Activated CD4-positive, alpha-beta T cell treated with anti-CD3 and anti-CD28 coated beads, Interleukin-2, amount 10 ng/mL, durations not matched to agents 7 days and 5 days (primary cell): ENCODE measurements at regions of chr2 and their contacts with region 1.

Region 1: DNA sequence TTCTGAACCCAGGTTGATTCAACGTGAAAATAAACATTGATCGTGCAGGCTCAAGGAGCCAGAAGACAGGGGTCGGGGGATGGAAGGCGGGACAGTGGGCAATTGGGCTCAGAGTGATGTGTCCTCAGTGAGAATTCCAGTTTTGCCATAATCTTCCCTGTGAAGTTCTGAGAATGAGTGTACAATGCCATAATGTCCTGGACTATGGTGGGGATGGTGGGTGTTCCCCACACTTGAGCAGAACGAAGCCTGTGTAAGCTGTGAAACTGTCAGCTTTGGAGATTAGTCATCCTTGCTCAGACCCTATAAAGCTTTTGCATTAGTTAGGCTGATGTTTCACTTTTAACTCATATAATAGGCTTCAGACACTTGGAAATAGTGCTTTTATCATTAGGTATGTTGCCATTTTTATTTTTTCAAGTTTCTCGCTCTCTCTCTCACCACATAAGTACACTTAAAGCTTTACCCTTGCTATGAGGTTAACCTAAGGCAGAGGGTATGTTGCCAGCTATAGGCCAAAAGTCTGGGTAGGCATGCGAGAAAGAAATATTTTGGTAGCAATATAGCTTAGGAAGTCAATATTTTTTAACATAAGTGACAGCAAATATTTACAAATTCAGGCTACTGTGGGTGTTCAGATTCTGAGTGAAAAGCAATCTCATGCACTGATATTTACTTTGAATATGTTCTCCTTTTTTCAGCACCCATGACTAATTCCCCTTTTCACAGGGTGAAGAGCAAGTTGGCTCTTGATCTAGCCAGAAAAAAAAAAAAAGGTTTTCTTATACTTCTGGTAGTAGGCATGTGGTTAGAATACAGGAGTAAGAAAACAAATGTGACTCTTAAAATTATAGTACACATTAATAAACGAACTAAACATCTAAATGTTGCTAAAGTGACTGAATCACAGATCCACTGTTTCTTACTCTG is 47.2 kb downstream of the CDC42EP3 start:
- DNase-seq: no peak
- H3K4me3 Mint-ChIP-seq: peak overlapping the region; percentile 5
- H3K27ac Mint-ChIP-seq: peak overlapping the region; percentile 89
- H3K4me1 Mint-ChIP-seq: peaks cover 45% of the 10 kb centered on the region
- H3K27me3 Mint-ChIP-seq: no peaks in the 10 kb centered on the region

Region 2: GRCh38 chr2:37337642-37338310 is 286.5 kb before region 1 on chr2:
- CTCF ChIA-PET with region 1: no interaction called
- POLR2A ChIA-PET with region 1: no interaction called
- DNase-seq: no peak
- H3K4me3 Mint-ChIP-seq: no peak overlapping the region
- H3K27ac Mint-ChIP-seq: no peak overlapping the region
- H3K4me1 Mint-ChIP-seq: no peaks in the 10 kb centered on the region
- H3K27me3 Mint-ChIP-seq: peaks cover 67% of the 10 kb centered on the region

Region 3: GRCh38 chr2:37614061-37614738 is 10.0 kb before region 1 on chr2:
- CTCF ChIA-PET with region 1: interaction called, 12 read pairs
- POLR2A ChIA-PET with region 1: no interaction called
- DNase-seq: no peak
- H3K4me3 Mint-ChIP-seq: no peak overlapping the region
- H3K27ac Mint-ChIP-seq: peak overlapping the region; percentile 94
- H3K4me1 Mint-ChIP-seq: peaks cover 38% of the 10 kb centered on the region
- H3K27me3 Mint-ChIP-seq: no peaks in the 10 kb centered on the region

Region 4: GRCh38 chr2:37742286-37742685 is 118.0 kb after region 1 on chr2:
- CTCF ChIA-PET with region 1: no interaction called
- POLR2A ChIA-PET with region 1: no interaction called
- DNase-seq: no peak
- H3K4me3 Mint-ChIP-seq: no peak overlapping the region
- H3K27ac Mint-ChIP-seq: no peak overlapping the region
- H3K4me1 Mint-ChIP-seq: no peaks in the 10 kb centered on the region
- H3K27me3 Mint-ChIP-seq: no peaks in the 10 kb centered on the region